ENCODE measurements at regions of chr10 and their contacts with region 1.

Region 1: GRCh38 chr10:132788180-132788830 is 2.4 kb upstream of the NKX6-2 start:
- DNase-seq: peak in 6 of 10 donors; percentile 49 to 95 (median 70)

Region 2: DNA sequence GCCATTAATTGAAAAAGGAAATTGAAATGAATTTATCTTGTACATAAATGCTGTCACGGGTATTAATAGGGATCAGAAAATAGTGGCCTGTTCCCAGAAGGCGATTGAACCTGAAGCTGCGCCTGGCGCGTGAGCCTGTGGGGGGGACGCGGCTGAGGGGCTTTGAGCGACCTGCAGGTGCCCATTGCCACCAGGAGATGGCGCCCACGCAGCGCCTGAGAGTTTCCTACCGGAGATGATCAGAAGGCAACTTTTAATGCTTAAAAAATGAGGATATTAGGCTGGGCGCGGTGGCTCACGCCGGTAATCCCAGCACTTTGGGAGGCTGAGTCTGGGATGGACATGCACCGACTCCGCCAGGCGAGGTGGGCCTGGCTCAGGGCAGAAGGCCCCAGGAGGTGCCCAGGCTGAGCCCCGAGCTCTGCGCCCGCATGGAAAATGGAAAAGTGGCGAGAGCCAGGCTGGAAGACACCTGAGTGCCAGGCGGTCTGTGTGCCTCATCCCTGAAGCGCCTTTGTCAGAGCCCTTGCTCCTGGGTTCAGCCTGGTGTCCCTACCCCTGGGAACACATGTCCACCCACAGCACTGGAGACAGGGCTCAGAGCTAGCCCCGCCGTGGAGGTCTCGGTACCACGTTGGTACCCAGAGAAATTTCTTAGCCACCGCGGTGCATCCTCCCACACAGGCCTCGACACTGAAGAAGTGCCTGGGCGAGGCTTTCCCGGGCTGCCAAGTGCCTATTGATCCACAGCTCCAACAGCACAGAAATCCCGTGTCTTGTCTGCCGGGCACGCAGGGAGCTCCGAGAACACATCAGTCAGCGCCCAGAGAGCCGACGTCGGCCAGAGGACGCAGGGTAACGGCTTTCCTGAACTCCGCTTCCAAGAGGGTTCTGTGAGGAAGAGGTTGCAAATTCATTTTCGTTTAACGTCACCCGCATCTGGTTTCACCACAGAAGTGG is 133.3 kb before region 1 on chr10:
- intact Hi-C with region 1: loop called (anchors 1 kb)
- DNase-seq: peak; percentile 62 to 97 (median 80)